AG04450 (cell line): ENCODE measurements at regions of chr2 and their contacts with region 1.

Region 1: GRCh38 chr2:9638532-9638931 is 7.7 kb upstream of the YWHAQ start:
- DNase-seq: peak; percentile 92
- H3K4me3 ChIP-seq: peak overlapping the region; percentile 41
- H3K27ac ChIP-seq: peak overlapping the region; percentile 77
- H3K27me3 ChIP-seq: no peaks in the 10 kb centered on the region
- CTCF ChIP-seq: no peak

Region 2: DNA sequence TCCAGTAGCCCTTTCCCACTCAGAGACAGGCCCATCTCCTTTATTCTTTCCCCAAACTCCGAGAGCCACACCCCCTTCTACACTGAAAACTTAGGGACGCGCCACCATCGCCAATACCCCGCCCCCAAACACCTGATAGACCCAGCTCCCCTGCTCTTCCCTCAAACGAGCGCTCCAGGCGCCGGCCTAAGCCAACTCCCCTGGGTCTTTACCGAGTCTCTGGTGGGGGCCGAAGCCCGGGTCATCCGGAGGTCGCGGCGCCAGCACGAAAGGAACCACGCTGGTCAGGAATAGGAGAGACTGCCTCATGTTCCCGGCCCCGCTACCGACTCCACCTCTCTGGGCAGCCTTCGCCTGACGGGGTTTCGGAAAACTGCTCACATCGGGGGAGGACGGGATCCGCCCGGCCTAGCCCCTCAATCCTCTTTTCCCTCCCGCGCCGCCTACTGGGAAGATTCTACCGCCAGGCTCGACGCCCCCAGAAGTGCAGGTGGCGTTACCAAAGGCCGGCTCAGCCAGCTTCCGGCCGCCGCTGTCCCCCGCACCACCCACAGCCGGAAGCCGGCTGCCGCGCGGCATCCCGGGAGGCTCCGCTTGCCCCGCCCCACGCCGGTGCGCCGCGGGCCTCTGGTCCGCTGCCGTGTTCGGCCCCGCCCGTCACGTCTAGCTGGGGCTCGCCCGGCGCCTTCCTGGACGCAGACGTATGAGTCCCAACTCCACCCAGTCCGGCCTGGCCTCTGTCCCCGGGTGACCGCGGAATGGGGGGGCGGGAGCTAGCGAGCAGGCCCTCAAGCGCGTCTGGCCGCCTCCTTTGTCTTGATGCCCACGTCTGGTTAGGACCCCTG is 83.0 kb before region 1 on chr2 and contains the start of gene ADAM17:
- CTCF ChIA-PET with region 1: no interaction called
- POLR2A ChIA-PET with region 1: interaction called, 11 read pairs
- DNase-seq: peak; percentile 85
- H3K4me3 ChIP-seq: peak within 1 kb of the TSS; percentile 98
- H3K27ac ChIP-seq: peak within 1 kb of the TSS; percentile 97
- H3K27me3 ChIP-seq: no peaks in the 10 kb centered on the region
- CTCF ChIP-seq: peak; percentile 65
- polyA plus RNA-seq, gene ADAM17: 12.6 and 14.0 TPM in 2 replicates

Region 3: DNA sequence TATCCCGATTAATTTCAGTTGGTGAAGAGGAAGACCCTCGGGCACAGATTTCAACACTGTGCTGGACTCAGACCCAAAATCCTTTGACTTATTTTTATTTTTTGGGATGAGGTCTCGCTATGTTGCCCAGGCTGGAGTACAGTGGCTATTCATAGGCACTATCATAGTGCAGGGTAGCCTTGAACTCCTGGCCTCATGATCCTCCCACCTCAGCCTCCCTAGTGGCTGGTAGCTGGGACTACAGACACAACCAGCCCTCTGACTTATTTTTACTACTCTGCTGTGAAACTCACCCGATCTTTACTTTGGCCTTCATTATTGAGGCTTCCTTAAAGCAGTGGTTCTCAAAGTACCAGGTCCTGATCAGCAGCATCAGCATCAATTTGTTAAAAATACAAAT is 64.7 kb before region 1 on chr2:
- CTCF ChIA-PET with region 1: no interaction called
- POLR2A ChIA-PET with region 1: no interaction called
- DNase-seq: no peak
- H3K4me3 ChIP-seq: no peak overlapping the region
- H3K27ac ChIP-seq: no peak overlapping the region
- H3K27me3 ChIP-seq: no peaks in the 10 kb centered on the region
- CTCF ChIP-seq: 0 out of 2 replicates have a peak, but pooled peaks have one; percentile 12

Region 4: DNA sequence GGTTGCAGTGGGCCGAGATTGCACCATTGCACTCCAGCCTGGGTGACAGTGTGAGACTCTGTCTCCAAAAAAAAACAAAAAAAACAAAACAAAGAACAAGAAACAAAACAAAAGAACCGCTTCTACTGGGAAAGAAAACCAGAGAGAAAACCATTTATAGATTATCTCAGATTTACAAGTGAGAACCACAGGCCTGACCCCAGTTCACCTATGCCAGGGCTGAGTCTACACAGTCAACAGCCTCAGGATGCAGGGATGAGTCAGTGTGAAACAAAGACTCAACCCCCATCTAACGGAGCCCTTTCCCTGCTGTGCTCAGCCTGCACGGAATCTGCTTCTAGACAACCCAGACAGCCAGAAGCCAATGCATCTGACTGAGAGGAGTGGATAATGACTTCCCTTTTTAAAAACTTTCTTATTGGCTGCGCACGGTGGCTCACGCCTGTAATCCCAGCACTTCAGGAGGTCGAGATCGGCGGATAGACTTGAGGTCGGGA is 17.8 kb after region 1 on chr2:
- CTCF ChIA-PET with region 1: no interaction called
- POLR2A ChIA-PET with region 1: interaction called, 17 read pairs
- DNase-seq: peak; percentile 87
- H3K4me3 ChIP-seq: no peak overlapping the region
- H3K27ac ChIP-seq: peak overlapping the region; percentile 96
- H3K27me3 ChIP-seq: no peaks in the 10 kb centered on the region
- CTCF ChIP-seq: no peak

Region 5: DNA sequence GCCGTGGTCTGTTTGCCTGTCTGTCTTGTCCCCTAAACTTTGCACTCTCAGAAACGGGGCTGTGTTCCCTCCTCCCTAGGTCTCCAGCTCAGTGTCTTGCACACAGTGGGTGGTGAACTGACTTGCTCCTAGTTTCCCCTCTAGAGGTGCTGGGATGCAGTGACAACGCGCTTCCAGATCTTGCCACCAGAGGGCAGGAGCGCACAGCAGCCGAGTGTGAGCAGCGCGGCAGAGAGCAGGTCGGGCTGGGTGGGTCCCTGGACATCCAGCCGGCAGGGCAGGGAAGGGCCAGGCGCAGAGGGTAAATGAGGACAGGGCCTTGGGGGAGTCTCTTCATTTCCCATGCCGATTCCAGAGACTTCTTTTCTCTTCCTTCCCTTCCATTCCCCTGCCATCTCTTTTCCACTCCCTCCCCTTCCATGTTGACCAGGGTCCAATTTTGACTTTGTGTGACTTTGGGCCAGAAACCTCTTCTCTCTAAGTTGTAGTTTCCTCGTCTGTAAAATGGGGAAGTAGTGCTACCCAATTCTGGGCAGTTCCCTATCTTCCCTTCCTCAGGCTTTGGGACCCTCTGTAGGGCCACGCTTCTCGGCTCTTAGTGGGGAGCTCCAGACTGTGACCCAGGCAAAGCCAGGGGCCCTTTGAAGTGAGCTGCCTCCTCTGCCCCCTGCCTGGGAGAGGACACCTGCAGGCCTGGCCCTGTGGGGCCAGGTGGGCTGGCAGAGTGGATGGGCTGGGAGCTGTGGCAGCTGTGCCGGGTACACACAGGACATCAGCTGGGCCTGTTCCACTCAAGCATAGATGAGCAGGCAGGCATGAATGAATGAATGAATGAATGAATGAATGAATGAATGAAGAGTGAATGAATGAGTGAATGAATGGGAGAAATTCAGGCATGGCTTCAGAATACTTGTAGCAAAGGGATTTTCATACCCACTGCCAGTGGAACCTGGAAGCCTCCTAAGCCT is 161.4 kb after region 1 on chr2:
- CTCF ChIA-PET with region 1: no interaction called
- POLR2A ChIA-PET with region 1: no interaction called
- DNase-seq: peak; percentile 44
- H3K4me3 ChIP-seq: no peak overlapping the region
- H3K27ac ChIP-seq: no peak overlapping the region
- H3K27me3 ChIP-seq: no peaks in the 10 kb centered on the region
- CTCF ChIP-seq: peak; percentile 99